WTC11 (cell line): ENCODE measurements at regions of chr5 and their contacts with region 1.

Region 1: DNA sequence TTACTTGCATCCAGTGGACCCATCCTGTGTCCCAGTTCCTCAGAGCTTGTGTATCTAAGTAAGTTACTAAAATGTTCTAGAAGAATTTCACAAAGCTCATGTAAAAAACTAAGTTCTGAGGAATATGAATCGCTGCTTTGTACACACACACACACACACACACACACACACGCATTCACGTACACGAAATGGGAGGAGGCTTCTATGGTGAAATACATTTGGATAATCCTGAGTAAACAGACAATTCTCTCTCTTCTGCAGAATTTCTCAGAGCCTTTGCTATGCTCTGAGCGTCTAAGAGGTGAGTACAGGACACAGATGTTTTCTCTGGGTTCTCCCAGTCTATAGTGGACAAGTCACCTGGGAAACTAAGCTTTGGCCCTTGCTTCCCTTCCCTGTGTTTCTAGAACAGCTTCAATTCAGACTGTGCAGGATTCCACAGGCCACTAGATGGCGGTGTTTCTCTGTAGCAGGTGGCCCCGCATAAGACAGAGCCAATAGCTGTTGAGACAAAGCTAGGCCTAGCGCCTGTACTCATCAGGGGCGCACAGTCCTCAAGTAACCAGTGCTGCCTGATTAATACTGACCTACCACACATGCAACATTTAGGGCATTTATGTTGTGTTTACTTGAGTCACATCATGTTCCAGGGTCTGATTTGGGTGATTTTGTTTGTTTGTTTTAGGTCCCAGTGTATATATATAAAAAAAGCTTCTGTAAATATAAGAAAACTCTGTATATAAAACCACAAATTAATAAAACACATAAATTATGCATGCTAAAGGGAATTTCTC is 114.8 kb downstream of the LIFR start:
- DNase-seq: peak; percentile 92
- ATAC-seq: peak; percentile 98
- H3K4me3 Mint-ChIP-seq: no peak overlapping the region
- H3K27ac Mint-ChIP-seq: no peak overlapping the region
- H3K4me1 Mint-ChIP-seq: peaks cover 4% of the 10 kb centered on the region
- H3K27me3 Mint-ChIP-seq: no peaks in the 10 kb centered on the region
- CTCF ChIP-seq: peak; percentile 86

Region 2: DNA sequence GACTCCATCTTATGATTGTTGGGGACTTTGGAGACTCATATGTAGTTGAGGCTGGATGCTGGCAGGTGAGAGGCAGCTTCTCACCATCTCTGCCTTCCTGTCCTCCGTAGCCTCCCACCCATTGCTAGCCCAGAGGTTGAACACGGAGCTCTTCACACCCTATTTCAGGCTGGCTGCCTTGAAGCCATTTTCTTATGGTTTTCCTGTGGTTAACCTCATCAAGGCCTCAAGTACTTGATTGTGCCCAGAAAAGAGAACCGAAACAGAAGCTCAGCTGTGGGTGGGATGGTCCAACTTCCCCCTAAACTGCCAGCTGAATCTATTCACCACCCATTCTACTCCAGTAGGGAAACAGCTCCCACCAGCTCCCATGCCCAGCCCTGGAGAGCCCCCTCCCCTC is 11.9 kb after region 1 on chr5:
- CTCF ChIA-PET with region 1: interaction called, 32 read pairs
- POLR2A ChIA-PET with region 1: no interaction called
- DNase-seq: no peak
- ATAC-seq: no peak
- H3K4me3 Mint-ChIP-seq: no peak overlapping the region
- H3K27ac Mint-ChIP-seq: no peak overlapping the region
- H3K4me1 Mint-ChIP-seq: no peaks in the 10 kb centered on the region
- H3K27me3 Mint-ChIP-seq: no peaks in the 10 kb centered on the region
- CTCF ChIP-seq: no peak

Region 3: DNA sequence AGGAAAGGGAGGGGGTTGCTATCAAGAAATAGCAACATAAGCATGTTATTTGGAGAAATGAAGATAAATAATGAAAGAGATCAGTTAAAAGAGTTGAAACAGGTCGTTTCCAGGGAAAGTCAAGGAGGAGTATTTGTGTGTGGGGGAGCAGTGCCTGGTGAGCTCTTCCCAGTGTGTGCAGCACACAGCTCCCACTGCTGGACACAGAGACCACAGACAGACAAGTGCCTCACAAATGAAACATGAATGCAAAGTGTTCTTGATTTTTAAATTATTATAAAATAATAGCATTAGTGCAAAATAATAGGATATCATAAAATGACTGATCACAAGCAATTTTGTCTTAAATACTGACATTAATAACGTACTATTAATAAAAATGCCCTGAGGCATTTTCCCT is 74.0 kb after region 1 on chr5:
- CTCF ChIA-PET with region 1: interaction called, 15 read pairs
- POLR2A ChIA-PET with region 1: no interaction called
- DNase-seq: no peak
- ATAC-seq: no peak
- H3K4me3 Mint-ChIP-seq: no peak overlapping the region
- H3K27ac Mint-ChIP-seq: no peak overlapping the region
- H3K4me1 Mint-ChIP-seq: no peaks in the 10 kb centered on the region
- H3K27me3 Mint-ChIP-seq: no peaks in the 10 kb centered on the region
- CTCF ChIP-seq: no peak

Region 4: DNA sequence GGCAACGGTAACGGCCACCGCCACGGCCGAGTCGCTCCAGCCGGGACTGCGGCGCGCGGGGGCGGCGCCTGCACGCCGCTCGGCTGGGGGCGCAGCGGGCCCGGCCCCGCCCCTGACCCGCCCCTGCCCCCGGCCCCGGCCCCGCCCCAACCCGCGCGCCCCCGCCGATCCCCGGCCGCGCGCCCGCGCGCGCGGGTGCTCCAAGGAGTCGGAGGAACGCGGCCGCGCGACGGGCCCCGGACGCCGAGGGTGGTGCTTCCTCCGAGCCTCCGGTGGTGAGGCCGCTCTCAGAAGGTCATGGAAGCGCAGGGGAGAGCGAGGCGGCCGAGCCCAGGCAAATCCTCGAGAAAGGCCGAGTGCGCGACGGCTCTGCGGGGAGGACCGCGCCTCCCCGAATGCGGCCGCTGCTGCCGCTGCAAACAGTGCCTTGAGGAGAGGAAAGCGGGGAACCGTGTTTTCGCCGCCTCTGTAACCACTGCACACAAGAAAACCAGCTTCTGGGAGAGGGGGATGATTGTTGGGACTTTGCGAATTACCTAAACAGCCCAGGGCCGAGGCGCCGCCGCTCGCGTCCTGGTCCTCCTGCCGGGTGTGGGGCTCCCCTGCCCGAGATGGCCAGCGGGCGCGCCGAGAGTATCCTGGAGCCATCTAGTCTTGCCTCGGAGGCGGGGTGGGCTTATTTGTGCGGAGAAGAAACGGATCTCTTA is 115.1 kb after region 1 on chr5 and contains the start of gene LIFR:
- CTCF ChIA-PET with region 1: interaction called, 36 read pairs
- POLR2A ChIA-PET with region 1: no interaction called
- DNase-seq: peak; percentile 82
- ATAC-seq: peak; percentile 80
- H3K4me3 Mint-ChIP-seq: peak within 1 kb of the TSS; percentile 95
- H3K27ac Mint-ChIP-seq: peak within 1 kb of the TSS; percentile 63; the same call in 1 of the 2 replicates
- H3K4me1 Mint-ChIP-seq: peaks cover 36% of the 10 kb centered on the region
- H3K27me3 Mint-ChIP-seq: peaks cover 7% of the 10 kb centered on the region
- CTCF ChIP-seq: no peak
- total RNA-seq, gene LIFR: 12.9 to 14.4 TPM (median 13.7 TPM) in 3 replicates

Region 5: DNA sequence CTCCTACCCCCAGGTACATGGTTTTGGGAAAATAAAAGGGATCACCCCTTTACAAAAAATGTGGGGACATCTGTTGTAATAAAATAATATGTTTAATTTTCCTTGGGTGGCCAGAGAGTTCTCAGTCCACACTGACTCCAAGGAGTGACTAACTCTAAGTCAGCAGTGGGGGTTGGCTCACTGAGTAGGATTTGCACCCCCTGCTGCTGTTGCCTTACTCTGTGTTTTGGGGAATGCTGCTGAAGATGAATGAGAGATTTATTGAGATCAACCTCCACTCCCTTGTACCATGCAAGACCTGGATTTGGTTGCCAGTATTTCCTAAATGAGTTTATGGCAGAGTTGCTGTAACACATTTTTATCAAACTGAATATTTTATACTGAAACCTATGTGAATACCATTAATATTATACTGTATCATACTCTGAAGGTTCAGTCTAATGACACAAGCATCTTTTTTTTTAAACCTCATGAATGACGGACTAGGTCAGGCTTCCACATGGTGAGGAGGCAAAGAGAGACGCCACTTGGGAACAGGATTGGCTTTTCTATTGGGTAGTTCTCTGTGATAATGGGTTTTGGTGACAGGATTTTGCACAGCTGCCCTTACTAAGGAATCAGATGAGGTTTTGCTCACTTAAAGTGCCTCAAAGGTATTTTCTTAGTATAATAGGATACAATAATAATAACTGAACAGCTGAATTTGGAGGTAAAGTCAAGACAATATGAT is 282.8 kb after region 1 on chr5:
- CTCF ChIA-PET with region 1: interaction called, 11 read pairs
- POLR2A ChIA-PET with region 1: no interaction called
- DNase-seq: no peak
- ATAC-seq: no peak
- H3K4me3 Mint-ChIP-seq: no peak overlapping the region
- H3K27ac Mint-ChIP-seq: no peak overlapping the region
- H3K4me1 Mint-ChIP-seq: peaks cover 23% of the 10 kb centered on the region
- H3K27me3 Mint-ChIP-seq: no peaks in the 10 kb centered on the region
- CTCF ChIP-seq: no peak

Region 6: DNA sequence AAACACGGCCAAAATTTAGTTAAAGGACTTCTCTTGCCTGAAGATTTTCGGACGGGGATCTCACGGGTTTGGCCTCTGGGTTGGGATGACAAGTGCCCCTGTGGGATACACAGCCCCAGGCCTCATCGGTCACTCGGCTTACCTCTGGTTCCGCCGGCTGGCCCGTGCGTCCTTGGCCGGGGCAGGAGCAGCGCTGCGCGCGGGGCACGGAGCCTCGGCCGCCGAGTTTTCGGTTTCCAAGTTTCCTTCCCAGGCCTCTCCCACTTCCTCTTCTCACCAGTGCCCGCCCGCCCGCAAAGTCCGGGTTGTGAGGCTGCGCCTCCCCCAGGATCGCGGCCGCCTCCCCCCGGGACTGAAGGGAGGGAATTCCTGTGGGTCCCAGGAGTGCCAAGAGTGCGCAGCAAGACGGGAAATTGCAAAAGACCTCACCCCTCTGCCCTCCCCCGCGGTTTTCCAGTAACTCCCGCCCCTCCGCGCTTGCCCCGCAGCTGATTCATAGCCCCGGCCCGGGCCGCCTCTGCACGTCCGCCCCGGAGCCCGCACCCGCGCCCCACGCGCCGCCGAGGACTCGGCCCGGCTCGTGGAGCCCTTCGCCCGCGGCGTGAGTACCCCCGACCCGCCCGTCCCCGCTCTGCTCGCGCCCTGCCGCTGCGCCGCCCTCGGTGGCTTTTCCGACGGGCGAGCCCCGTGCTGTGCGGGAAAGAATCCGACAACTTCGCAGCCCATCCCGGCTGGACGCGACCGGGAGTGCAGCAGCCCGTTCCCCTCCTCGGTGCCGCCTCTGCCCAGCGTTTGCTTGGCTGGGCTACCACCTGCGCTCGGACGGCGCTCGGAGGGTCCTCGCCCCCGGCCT is 404.1 kb after region 1 on chr5 and contains the start of gene OSMR:
- CTCF ChIA-PET with region 1: interaction called, 10 read pairs
- POLR2A ChIA-PET with region 1: no interaction called
- DNase-seq: peak; percentile 69
- ATAC-seq: peak; percentile 80
- H3K4me3 Mint-ChIP-seq: peak within 1 kb of the TSS; percentile 90
- H3K27ac Mint-ChIP-seq: no peak within 1 kb of the TSS
- H3K4me1 Mint-ChIP-seq: peaks cover 21% of the 10 kb centered on the region
- H3K27me3 Mint-ChIP-seq: peaks cover 42% of the 10 kb centered on the region
- CTCF ChIP-seq: no peak
- total RNA-seq, gene OSMR: 2.3 to 3.1 TPM (median 2.5 TPM) in 3 replicates